Left cardiac atrium (tissue), 4 donors: ENCODE measurements at regions of chr10 and their contacts with region 1.

Region 1: DNA sequence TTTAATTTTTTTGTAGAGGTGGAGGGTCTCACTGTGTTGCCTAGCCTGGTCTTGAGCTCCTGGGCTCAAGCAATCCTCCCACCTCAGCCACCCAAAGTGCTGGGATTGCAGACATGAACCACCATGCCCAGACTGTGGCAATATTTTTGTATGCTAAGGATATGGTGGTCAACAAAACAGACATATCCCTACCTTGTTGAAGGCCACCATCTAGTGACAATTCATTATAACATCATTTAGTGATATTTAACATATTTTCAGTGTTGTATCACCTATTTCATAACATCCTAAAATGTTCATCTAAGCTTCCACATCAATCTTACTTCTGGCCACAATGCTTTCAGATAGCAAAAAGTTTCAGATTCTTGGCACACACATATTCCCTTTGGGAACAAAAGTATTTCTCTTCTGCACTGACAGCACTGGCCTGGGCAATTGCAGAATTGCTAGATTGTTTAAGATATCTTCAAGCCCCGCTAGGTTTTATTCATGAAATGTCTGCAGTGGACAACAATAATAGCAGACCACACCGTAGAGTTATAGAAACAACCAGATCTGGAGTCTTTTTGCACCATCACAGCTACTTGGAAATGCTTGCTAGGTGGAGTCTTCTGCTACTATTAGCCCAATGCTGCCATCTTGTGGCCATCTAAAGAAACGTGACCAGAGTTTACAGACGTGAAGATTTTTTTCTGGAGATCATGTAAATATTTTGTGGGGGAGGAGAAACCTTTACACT is 58.4 kb downstream of the DNAJC12 start:
- DNase-seq: peak; percentile 64
- ATAC-seq: peak; percentile 79 to 81

Region 2: GRCh38 chr10:67666416-67667034 is 113.1 kb before region 1 on chr10:
- intact Hi-C with region 1: loop called in 1 of 2 experiments (anchors 2 kb)
- DNase-seq: no peak
- ATAC-seq: peak; percentile 37 to 67

Region 3: GRCh38 chr10:67697724-67698131 is 81.9 kb before region 1 on chr10:
- intact Hi-C with region 1: loop called in 1 of 2 experiments (anchors 2 kb)
- DNase-seq: no peak
- ATAC-seq: peak; percentile 70 to 80

Region 4: GRCh38 chr10:67864607-67865371 is 85.2 kb after region 1 on chr10:
- intact Hi-C with region 1: no loop called
- DNase-seq: no peak
- ATAC-seq: no peak